Activated B cell treated with CpG ODN at 0.5 μM for 24 hours (primary cell): ENCODE measurements at regions of chr9 and their contacts with region 1.

Region 1: DNA sequence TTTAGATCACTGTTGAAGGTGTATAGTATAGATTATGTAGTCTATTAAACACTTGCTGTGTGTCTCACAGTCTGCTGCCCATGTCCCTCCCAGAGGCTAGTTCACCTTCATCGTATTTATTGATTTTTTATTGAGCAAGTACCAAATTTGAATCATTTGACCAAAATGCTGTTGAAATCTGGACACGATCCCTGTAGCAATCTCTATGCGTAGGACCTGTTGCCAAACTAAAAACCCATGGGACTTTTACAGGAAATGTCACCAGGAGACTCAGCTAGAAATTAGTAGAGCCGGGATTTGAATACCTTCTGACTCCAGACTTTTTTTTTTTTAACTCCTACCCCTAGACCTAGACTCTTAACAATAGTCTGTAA is 17.5 kb downstream of the SLC31A1 start:
- DNase-seq: no peak
- ATAC-seq: no peak
- H3K4me3 Mint-ChIP-seq: no peak overlapping the region
- H3K27ac Mint-ChIP-seq: no peak overlapping the region
- H3K4me1 Mint-ChIP-seq: peaks cover 12% of the 10 kb centered on the region
- H3K27me3 Mint-ChIP-seq: no peaks in the 10 kb centered on the region
- CTCF ChIP-seq: no peak

Region 2: GRCh38 chr9:113227436-113227835 is 11.4 kb before region 1 on chr9:
- CTCF ChIA-PET with region 1: no interaction called
- POLR2A ChIA-PET with region 1: no interaction called
- intact Hi-C with region 1: loop called (anchors 1 kb)
- DNase-seq: no peak
- ATAC-seq: no peak
- H3K4me3 Mint-ChIP-seq: no peak overlapping the region
- H3K27ac Mint-ChIP-seq: no peak overlapping the region
- H3K4me1 Mint-ChIP-seq: peaks cover 7% of the 10 kb centered on the region
- H3K27me3 Mint-ChIP-seq: no peaks in the 10 kb centered on the region
- CTCF ChIP-seq: no peak